ENCODE measurements at regions of chr22 and their contacts with region 1.

Region 1: DNA sequence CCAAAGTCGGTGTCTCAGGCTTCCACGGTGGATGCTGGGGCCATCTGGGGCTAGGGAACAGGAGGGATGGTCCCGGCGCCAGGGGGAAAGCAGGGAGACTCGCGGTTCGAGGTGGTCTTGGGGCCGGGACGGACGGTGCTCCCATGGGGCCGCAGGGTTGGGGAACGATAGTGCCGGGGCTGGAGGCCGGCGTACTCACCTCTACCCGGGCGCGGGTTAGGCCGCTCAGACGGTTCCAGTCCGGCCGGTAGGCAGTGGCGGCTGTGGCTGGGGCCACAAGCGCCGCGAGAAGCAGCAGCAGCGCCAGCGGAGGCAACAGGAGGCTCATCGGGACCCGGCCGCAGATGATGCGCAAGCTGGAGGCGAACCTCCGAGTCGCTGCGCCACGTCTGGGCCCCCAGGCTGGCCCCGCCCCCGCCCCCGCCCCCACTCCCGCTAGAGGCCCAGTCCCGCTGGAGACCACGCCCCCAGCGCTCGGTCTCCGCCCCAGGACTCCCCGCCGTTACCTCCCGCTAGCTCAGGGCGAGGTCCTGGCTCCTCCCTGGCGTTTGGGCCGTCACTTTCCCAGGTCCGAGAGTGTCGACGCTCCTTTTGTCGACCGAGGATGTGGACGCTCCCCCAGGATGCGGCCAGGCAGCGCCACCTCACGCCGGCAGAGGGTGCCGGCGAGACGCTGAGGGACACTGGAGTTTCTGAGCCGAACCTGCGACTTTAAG is at the start of gene SELENOM:
- DNase-seq: peak; percentile 98
- H3K4me3 ChIP-seq: peak within 1 kb of the TSS; percentile 10 to 85 (median 60)
- H3K27ac ChIP-seq: peak within 1 kb of the TSS; percentile 64
- H3K4me1 ChIP-seq: peaks cover 11% of the 10 kb centered on the region
- H3K27me3 ChIP-seq: no peaks in the 10 kb centered on the region
- CTCF ChIP-seq: peak; percentile 97 to 99
- POLR2A ChIP-seq: peak; percentile 71
- total RNA-seq, gene SELENOM: 29.6 TPM in 2 replicates

Region 2: GRCh38 chr22:30617819-30618218 is 489.5 kb before region 1 on chr22:
- CTCF ChIA-PET with region 1: no interaction called
- POLR2A ChIA-PET with region 1: no interaction called
- dilution Hi-C with region 1: no loop called
- intact Hi-C with region 1: no loop called
- DNase-seq: no peak
- H3K4me3 ChIP-seq: no peak overlapping the region
- H3K27ac ChIP-seq: no peak overlapping the region
- H3K4me1 ChIP-seq: no peaks in the 10 kb centered on the region
- H3K27me3 ChIP-seq: no peaks in the 10 kb centered on the region
- CTCF ChIP-seq: no peak
- POLR2A ChIP-seq: no peak

Region 3: DNA sequence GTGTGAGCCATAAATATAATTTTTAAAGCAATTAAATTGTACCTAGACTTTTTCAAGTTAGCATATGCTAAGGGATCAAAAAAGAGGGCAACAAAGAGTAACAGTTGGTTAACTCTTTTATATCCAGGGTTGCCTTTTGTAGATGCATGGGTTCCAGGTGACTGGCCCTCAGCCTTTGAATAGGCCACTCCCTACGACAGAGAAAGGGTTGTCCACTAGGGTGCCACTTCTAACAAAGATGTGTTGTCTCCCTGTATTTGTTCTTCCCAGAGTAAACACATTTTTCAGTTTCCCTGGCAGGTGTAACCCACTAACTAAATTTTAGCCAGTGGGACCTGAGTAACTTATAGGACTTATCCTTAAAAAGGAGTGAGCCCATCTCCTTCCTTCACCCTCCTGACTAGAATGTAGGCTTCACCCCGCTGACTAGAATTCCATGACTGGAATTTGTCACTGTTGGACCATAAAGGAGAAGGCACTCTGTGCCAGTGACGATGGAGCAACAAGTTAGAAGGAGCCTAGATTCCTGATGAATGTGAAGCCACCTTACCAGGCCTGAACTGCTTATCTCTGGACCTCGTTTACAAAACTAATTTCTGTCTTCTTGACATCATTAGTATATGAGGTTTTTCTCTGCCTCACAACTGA is 121.7 kb before region 1 on chr22:
- CTCF ChIA-PET with region 1: no interaction called
- POLR2A ChIA-PET with region 1: no interaction called
- dilution Hi-C with region 1: no loop called
- intact Hi-C with region 1: no loop called
- DNase-seq: no peak
- H3K4me3 ChIP-seq: no peak overlapping the region
- H3K27ac ChIP-seq: no peak overlapping the region
- H3K4me1 ChIP-seq: no peaks in the 10 kb centered on the region
- H3K27me3 ChIP-seq: peaks cover 0 to 3% of the 10 kb centered on the region in 2 experiments
- CTCF ChIP-seq: no peak
- POLR2A ChIP-seq: no peak

Region 4: DNA sequence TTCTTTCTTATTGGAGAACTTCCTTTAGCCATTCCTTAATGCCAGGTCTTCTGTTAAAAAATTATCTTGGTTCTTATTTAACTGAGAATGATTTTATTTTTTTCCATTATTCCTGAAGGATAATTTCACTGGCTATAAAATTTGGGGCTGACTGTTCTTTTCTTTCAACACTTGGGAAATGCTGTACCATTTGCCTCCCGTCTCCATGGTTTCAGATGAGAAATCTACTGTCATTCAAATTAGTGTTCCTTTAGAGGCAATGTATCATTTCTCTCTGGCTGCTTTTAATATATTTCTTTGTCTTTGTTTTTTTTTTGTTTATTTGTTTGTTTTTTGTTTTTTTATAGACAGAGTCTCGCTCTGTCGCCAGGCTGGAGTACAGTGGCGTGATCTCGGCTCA is 78.1 kb before region 1 on chr22:
- CTCF ChIA-PET with region 1: no interaction called
- POLR2A ChIA-PET with region 1: no interaction called
- dilution Hi-C with region 1: no loop called
- intact Hi-C with region 1: no loop called
- DNase-seq: no peak
- H3K4me3 ChIP-seq: no peak overlapping the region
- H3K27ac ChIP-seq: no peak overlapping the region
- H3K4me1 ChIP-seq: no peaks in the 10 kb centered on the region
- H3K27me3 ChIP-seq: no peaks in the 10 kb centered on the region
- CTCF ChIP-seq: no peak
- POLR2A ChIP-seq: no peak

Region 5: DNA sequence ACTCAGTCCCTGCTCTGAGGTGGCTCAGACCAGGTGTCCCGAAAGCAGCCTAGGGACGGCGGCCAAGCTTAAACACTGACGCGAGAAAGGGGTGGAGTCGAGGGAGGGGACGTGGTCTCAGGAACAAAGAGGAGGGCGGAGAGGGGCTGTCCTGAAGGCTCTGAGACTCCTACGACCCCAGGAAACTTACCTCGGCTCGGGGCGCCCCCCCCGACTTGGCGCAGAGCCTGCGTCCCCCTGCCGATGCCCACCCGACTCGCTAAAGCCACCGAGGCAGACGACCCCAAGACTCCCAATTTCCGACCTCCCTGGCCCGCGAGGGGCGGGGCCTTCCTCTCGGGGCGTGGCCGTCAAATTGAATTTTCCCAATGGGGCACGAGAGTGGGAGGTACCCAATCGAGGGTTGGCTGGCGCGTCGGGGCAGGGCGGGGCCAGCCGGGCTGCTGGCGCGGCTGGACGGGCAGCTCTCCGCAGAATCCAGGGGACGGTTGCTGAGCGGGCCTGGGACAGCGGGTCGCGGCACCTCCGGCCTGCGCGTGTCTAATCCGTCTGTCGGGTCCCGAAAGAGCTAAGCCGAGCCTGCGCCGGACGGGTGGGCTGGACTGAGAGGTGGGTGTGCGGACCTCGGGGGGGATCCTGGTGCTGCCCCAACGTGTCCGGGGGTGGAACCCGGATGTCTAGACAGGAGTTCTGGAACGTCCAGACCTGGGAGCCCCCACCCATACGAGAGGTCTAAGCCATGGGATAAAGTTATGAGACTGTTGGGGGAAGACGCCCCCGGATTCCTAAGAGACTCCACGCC is 26.3 kb before region 1 on chr22 and contains the start of gene SMTN:
- CTCF ChIA-PET with region 1: interaction called, 28 read pairs
- POLR2A ChIA-PET with region 1: interaction called, 3 read pairs
- dilution Hi-C with region 1: no loop called
- intact Hi-C with region 1: no loop called
- DNase-seq: peak; percentile 96
- H3K4me3 ChIP-seq: peak within 1 kb of the TSS; percentile 47 to 85 (median 65)
- H3K27ac ChIP-seq: peak within 1 kb of the TSS; percentile 96
- H3K4me1 ChIP-seq: peaks cover 33% of the 10 kb centered on the region
- H3K27me3 ChIP-seq: no peaks in the 10 kb centered on the region
- CTCF ChIP-seq: no peak
- POLR2A ChIP-seq: peak; percentile 97
- total RNA-seq, gene SMTN: 197 and 201 TPM in 2 replicates

Region 6: DNA sequence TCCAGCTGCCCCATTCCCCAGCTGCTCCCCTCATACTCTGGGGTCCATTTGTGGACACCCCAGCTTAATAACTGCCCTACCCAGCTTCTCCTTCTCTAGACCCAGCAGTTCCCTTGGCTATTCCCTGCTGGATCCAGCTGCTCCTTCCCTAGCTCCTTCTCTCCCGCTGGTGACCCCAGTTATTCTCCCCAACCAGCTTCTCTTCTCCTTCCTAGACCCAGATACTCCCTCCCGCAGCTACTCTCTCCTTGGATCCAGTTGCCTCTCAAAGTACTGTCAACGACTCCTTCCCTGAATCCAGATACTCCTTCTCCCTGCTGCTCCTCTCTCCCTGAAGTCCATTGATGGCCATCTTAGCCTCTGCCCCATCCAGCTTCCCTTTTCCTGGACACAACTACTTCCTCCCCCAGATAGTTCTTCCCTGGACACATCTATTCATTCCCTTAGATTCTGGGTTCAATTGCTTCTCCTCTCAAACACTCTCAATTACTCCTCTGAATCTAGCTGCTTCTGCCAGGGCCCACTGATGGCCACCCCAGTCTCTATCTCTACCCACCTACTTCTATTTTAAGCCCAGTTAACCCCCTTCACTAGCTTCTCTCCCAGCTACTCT is 11.6 kb before region 1 on chr22:
- CTCF ChIA-PET with region 1: interaction called, 14 read pairs
- POLR2A ChIA-PET with region 1: interaction called, 3 read pairs
- dilution Hi-C with region 1: no loop called
- intact Hi-C with region 1: no loop called
- DNase-seq: no peak
- H3K4me3 ChIP-seq: no peak overlapping the region
- H3K27ac ChIP-seq: no peak overlapping the region
- H3K4me1 ChIP-seq: no peaks in the 10 kb centered on the region
- H3K27me3 ChIP-seq: no peaks in the 10 kb centered on the region
- CTCF ChIP-seq: no peak
- POLR2A ChIP-seq: peak; percentile 16

Region 7: GRCh38 chr22:31127181-31127772 is 19.9 kb after region 1 on chr22:
- CTCF ChIA-PET with region 1: interaction called, 12 read pairs
- POLR2A ChIA-PET with region 1: no interaction called
- dilution Hi-C with region 1: no loop called
- intact Hi-C with region 1: no loop called
- DNase-seq: no peak
- H3K4me3 ChIP-seq: no peak overlapping the region
- H3K27ac ChIP-seq: no peak overlapping the region
- H3K4me1 ChIP-seq: no peaks in the 10 kb centered on the region
- H3K27me3 ChIP-seq: peaks cover 0 to 4% of the 10 kb centered on the region in 2 experiments
- CTCF ChIP-seq: no peak
- POLR2A ChIP-seq: no peak

Region 8: GRCh38 chr22:31148953-31149627 is 41.8 kb after region 1 on chr22:
- CTCF ChIA-PET with region 1: interaction called, 231 read pairs
- POLR2A ChIA-PET with region 1: no interaction called
- dilution Hi-C with region 1: no loop called
- intact Hi-C with region 1: loop called (anchors 1 kb)
- DNase-seq: peak; percentile 84
- H3K4me3 ChIP-seq: no peak overlapping the region
- H3K27ac ChIP-seq: peak overlapping the region; percentile 62
- H3K4me1 ChIP-seq: peaks cover 8% of the 10 kb centered on the region
- H3K27me3 ChIP-seq: no peaks in the 10 kb centered on the region
- CTCF ChIP-seq: peak; percentile 97 to 99
- POLR2A ChIP-seq: no peak

Region 9: DNA sequence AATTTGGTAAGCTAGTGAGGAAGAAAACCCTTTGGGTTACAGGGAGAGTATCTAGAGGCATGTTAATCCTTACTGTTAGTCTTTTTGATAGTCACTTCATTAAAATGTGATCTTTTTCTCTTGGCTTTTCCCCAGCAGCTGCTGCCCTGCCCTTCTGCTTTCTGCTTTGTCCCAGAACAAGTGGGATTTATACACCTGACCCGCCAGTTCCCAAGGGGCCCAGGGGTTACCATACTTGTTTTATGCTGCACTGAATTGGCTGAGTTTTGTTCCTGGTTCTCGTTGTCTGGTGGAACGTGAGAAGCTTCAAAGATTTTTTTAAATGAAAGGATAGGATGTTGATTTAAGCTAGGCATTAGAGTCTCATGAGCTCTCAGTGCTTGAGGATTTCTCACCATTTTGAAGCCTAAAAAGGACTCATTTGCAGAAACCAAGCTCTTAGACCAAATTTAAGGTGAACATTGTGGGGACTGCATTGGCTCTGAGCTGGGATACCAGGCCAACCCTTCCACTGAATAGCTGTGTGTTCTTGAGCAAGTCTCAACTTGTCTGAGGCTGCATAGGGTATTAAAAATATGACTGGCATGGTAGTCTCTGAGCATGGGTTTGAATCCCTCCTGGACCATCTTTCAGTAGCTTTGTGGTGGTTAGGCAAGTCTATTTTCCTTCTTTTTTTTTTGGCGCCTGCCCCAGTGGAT is 111.4 kb after region 1 on chr22:
- CTCF ChIA-PET with region 1: interaction called, 18 read pairs
- POLR2A ChIA-PET with region 1: interaction called, 3 read pairs
- dilution Hi-C with region 1: no loop called
- intact Hi-C with region 1: no loop called
- DNase-seq: no peak
- H3K4me3 ChIP-seq: no peak overlapping the region
- H3K27ac ChIP-seq: peak overlapping the region; percentile 94
- H3K4me1 ChIP-seq: peaks cover 51% of the 10 kb centered on the region
- H3K27me3 ChIP-seq: no peaks in the 10 kb centered on the region
- CTCF ChIP-seq: no peak
- POLR2A ChIP-seq: no peak

Region 10: DNA sequence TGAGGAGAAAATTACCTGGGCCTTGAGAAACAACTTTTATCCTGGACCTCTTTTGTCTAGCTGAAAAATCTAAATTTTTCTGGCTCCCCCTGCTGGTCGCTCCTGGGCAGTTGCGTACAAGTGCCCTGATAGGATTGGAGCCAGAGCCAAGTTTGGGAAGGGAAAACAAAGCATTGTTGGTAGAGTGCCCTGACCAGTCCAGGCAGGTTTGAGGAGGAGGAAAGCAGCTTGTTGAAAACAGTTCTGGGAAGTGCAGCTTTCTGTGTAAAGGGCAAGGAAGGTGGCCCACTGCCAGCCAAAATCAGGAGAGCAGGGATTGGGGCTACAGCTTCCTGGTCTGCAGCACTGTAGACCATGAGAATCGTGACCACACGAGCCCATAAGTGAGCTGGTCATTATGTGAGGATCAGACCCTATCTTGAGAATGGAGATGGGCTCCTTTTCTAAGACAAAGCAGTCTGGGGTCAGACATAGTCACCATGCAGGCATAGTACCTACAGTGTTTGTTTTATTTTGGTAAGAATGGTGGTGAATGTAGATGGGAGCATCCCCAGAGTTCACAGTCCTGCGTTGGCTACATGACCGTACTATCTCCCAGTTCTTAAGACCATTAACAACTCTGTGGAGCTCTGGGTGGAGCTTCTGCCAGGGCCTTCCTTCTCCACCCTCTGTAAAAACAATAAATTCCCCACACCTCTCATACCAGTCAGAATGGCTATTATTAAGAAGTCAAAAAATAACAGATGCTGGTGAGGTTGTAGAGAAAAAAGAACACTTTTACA is 206.2 kb after region 1 on chr22:
- CTCF ChIA-PET with region 1: interaction called, 15 read pairs
- POLR2A ChIA-PET with region 1: no interaction called
- dilution Hi-C with region 1: no loop called
- intact Hi-C with region 1: no loop called
- DNase-seq: peak; percentile 88
- H3K4me3 ChIP-seq: no peak overlapping the region
- H3K27ac ChIP-seq: no peak overlapping the region
- H3K4me1 ChIP-seq: peaks cover 2% of the 10 kb centered on the region
- H3K27me3 ChIP-seq: no peaks in the 10 kb centered on the region
- CTCF ChIP-seq: peak; percentile 84 to 86
- POLR2A ChIP-seq: no peak